ENCODE measurements at regions of chr18 and their contacts with region 1.

Region 1: GRCh38 chr18:9102508-9103375 is at the start of gene NDUFV2:
- DNase-seq: peak; percentile 97 to 98
- ATAC-seq: peak; percentile 91 to 99 (median 93)
- H3K4me3 ChIP-seq: peak within 1 kb of the TSS; percentile 74
- H3K4me3 Mint-ChIP-seq: peak within 1 kb of the TSS; percentile 96
- H3K27ac ChIP-seq: peak within 1 kb of the TSS; percentile 90
- H3K27ac Mint-ChIP-seq: peak within 1 kb of the TSS; percentile 85 to 98
- H3K4me1 ChIP-seq: peaks cover 12% of the 10 kb centered on the region
- H3K4me1 Mint-ChIP-seq: peaks cover 61% of the 10 kb centered on the region in 2 donors
- H3K27me3 ChIP-seq: no peaks in the 10 kb centered on the region
- H3K27me3 Mint-ChIP-seq: no peaks in the 10 kb centered on the region
- CTCF ChIP-seq: no peak
- total RNA-seq, gene NDUFV2: 137 to 188 (median 154) TPM

Region 2: DNA sequence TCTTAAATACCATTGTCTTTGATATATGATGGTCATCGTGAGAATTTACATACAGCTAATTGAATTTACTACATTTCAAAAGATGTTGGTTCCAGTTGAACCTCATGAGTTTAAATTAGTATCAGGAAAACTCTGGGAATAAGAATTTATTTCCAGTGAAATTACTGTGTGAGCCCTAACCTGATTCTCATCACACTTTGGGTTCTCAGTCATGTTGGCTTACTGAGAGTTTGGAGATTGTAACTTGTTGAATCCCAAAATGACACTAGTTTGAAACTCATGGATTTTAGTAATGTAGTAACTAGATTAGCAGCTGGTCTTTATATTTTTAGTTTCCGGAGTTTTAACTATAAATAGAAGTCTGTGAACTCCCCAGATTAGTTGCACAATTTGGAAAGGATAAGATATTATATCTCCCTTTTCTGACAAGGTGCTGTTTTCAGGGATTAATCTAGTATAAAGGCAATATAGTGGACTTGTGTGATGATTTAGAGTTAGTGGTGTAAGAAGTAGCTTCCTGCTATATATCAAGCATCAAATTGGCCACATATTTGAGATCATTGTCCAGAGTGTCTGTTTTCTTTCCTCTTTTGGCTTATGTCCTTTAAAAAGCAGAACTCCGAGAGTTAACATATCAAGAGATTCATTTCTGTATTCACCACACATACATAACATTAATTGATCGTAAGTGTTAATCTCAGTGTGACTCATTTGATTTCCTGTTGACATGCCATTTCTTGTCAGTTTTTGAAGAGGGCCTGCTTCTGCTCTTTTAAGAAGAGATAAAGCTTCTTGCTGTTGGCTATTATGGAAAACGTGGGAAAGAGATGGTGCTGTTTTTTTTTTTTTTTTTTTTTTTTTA is 15.5 kb after region 1 on chr18:
- intact Hi-C with region 1: loop called (anchors 1 kb)
- DNase-seq: peak in 1 of 2 donors; percentile 73
- ATAC-seq: peak; percentile 64 to 74 (median 64)
- H3K4me3 ChIP-seq: no peak overlapping the region
- H3K4me3 Mint-ChIP-seq: peak overlapping the region; percentile 63
- H3K27ac ChIP-seq: peak overlapping the region; percentile 88
- H3K27ac Mint-ChIP-seq: peak overlapping the region; percentile 90 to 96
- H3K4me1 ChIP-seq: peaks cover 19% of the 10 kb centered on the region
- H3K4me1 Mint-ChIP-seq: peaks cover 50 to 57% of the 10 kb centered on the region in 2 donors
- H3K27me3 ChIP-seq: no peaks in the 10 kb centered on the region
- H3K27me3 Mint-ChIP-seq: no peaks in the 10 kb centered on the region
- CTCF ChIP-seq: no peak

Region 3: DNA sequence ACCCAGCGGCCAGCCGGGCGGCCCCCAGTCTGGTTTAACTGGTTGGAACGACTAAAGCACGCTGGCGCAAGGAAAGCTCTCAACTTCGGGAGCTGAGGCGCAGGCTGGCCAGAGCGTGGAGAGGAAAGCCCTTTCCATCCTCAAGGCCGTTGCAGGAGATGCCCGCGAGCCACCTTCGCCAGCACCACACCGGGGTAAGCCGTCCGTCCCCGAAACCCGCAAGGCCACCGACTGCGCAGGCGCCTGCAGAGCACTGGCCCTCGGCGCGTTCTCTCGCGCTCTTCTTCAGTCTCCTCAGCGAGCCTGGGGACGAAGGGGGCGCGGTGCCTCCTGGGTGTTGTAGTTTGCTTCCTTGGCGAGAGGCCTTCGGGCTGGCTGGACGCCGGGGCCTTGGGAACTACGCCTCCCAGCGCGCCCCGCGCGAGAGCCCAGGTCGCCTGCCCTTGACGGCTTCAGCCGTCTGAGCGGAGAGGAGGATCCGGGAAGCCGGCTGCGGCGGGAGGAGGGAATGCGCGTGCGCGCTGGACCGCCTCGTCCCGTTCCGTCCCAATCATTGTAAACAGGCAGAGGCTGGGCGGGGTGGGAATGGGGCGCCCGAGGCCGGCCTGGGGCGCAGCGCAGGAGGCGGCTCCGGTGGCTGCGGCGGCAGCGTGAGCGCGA is 372.4 kb after region 1 on chr18 and contains the start of gene RALBP1:
- intact Hi-C with region 1: loop called (anchors 5 kb)
- DNase-seq: peak; percentile 96 to 98
- ATAC-seq: peak; percentile 96 to 100 (median 98)
- H3K4me3 ChIP-seq: peak within 1 kb of the TSS; percentile 79
- H3K4me3 Mint-ChIP-seq: peak within 1 kb of the TSS; percentile 99
- H3K27ac ChIP-seq: peak within 1 kb of the TSS; percentile 86
- H3K27ac Mint-ChIP-seq: peak within 1 kb of the TSS; percentile 88 to 98
- H3K4me1 ChIP-seq: peaks cover 23% of the 10 kb centered on the region
- H3K4me1 Mint-ChIP-seq: peaks cover 28 to 38% of the 10 kb centered on the region in 2 donors
- H3K27me3 ChIP-seq: peaks cover 4% of the 10 kb centered on the region
- H3K27me3 Mint-ChIP-seq: peaks cover 17 to 31% of the 10 kb centered on the region in 2 donors
- CTCF ChIP-seq: no peak
- total RNA-seq, gene RALBP1: 27.3 to 40.0 (median 33.4) TPM